ENCODE measurements at regions of chr2 and their contacts with region 1.

Region 1: DNA sequence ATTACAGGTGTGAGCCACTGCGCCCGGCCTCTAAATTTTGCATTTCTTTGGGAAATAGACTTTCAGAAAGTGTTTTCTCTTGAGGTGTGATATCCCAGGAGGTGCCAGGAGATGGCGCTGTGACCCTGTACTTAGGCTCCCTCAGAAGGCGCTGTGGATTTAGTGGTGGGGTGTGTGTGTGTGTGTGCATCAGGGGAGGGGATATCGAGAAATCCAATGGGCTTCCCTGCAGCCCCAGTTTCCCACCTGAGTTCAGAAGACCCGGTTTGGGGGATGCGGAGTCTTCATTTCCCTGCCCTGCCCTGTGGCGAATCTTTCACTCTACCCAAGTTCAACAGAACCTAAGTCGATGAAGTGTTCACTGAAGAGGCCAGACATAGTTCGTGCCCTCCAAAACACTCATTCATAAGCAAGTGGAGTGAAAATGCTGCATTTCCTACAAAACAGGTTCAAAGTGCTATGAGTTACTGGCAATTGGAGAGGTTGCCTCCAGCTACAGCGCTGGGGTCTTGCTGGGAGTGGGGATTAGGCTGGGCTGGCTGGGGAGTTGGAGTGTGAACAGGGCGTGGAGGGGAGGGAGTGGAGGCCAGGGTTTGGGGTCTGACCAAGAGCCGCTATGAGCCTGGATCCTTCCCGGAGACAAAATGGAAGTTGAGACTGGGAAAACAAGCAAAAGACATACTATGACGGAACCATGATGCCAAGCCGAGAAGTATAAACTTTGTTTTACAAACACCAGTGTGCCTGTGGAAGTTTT is 6.5 kb upstream of the WNT6 start:
- DNase-seq: no peak
- H3K4me3 ChIP-seq: no peak overlapping the region
- CTCF ChIP-seq: peak; percentile 76

Region 2: DNA sequence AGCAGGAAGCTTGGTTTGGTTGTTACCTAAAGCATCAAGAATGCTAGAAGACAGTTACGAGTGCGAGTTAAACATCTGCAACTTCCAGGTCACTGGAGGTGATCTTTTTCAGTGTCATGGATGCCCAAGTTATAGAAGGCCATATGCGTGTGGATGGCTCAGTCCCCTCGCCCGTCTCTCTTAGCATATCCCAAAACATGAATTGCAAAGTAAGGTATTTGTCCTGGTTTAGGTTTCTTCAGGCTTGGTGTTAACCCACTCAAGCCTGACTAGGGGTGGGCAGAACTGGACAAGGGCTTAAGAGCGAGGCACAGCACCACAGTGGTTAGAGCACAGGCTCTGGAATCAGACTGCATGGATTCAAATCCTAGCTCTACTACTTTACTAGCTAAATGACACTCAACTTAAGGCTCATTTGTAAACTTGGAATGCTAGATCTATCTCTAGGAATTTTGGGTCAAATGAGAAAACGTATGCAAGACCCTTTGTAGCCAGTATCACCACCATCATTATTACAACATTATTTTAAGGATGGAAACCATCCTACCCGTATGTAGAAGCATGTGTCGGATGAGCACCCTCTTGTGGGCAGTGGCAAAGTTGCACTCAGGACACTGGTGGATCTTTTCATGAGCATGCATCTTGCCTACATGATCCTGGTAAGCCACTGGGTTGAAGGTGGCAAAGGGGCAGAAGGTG is 204.9 kb before region 1 on chr2:
- CTCF ChIA-PET with region 1: interaction called, 34 read pairs
- POLR2A ChIA-PET with region 1: no interaction called
- DNase-seq: no peak
- H3K4me3 ChIP-seq: no peak overlapping the region
- CTCF ChIP-seq: peak; percentile 84

Region 3: GRCh38 chr2:218691234-218691633 is 161.9 kb before region 1 on chr2:
- CTCF ChIA-PET with region 1: interaction called, 71 read pairs
- POLR2A ChIA-PET with region 1: no interaction called
- DNase-seq: no peak
- H3K4me3 ChIP-seq: no peak overlapping the region
- CTCF ChIP-seq: no peak

Region 4: DNA sequence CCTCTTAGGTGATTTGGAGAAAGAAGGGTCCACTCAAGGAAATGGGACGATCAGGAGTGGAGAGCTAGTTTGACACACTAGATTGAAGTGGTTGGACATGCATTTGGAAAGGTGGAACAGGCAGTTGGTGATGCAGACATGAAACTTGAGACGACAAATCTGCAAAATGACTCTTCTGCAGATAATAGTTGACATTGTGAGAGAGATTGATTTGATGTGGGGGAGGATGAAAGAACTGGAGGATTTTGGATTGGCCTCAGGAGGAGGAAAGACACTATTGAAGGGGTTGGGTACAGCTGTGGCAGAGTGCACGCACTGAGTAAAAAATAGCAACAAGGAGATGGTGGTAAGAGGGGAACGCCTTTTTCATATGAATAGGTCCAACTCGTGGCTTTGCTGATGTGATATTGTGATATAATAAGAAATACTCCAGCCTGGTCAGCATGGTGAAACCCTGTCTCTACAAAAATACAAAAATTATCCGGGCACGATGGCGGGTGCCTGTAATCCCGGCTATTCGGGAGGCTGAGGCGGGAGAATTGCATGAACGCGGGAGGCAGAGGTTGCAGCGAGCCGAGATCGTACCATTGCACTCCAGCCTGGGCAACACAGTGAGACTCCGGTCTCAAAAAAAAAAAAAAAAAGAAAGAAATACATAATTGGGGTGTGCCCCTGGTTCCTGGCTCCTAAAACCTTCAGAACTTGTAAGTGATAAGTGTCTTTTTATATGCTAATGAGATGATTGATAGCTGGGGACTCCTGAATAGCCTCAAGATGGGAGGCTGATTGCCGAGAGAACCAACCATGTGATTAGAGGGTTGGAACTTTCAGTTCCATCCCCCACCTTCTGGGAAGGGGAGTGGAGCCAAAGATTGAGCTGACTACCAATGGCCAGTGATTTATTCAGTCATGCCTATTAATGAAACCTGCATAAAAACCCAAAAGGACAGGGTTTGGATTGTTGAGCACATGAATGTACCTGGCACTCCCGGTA is 132.7 kb before region 1 on chr2:
- CTCF ChIA-PET with region 1: interaction called, 106 read pairs
- POLR2A ChIA-PET with region 1: no interaction called
- DNase-seq: no peak
- H3K4me3 ChIP-seq: no peak overlapping the region
- CTCF ChIP-seq: no peak

Region 5: DNA sequence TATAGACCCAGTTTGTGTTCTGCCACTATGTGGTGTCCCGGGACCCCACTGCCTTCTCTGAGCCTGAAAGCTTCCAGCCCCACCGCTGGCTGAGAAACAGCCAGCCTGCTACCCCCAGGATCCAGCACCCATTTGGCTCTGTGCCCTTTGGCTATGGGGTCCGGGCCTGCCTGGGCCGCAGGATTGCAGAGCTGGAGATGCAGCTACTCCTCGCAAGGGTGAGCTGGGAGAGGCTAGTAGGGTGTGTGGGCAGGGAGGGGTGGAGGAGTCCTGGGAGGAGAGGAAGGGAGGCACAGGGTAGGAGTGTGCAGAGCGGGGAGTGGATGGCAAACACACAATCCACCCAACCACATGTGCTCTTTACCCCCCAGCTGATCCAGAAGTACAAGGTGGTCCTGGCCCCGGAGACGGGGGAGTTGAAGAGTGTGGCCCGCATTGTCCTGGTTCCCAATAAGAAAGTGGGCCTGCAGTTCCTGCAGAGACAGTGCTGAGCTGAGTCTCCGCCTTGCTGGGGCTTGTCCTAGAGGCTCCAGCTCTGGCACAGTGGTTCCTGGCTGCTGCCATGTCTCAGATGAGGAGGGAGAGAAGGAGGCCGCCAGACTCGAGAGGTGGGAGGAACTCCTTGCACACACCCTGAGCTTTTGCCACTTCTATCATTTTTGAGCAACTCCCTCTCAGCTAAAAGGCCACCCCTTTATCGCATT is 38.4 kb before region 1 on chr2:
- CTCF ChIA-PET with region 1: interaction called, 13 read pairs
- POLR2A ChIA-PET with region 1: no interaction called
- DNase-seq: no peak
- H3K4me3 ChIP-seq: no peak overlapping the region
- CTCF ChIP-seq: no peak

Region 6: DNA sequence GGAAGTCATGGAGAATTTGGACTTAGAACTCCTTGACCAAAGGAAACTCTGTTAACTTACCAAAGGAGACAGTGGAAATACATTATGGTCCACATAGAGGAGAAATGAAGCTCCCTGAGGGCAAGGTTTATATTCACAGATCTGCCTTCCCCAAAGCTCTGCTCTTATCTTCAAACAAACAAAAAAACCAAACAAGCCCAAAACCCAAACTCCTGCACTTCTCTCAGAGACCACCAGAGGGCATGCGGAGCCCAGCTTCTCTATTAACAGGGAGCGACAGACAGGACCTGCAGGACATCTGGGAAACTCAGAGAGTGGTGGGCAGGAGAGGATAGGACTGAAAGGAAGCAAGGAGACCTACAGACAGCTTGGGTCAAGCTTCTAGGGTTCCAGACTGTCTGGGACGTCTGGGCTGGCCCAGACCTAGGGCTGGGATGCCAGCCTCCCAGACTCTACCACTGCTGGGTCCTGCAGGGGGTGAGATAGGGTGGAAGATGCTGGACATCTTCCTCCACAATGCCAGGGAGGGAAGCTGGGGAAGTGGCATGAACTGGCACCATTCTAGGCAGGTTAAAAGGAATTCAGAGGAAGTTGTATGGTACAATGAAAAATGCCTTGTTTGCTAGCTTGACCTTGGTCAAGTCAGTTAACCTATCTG is 23.6 kb after region 1 on chr2:
- CTCF ChIA-PET with region 1: interaction called, 32 read pairs
- POLR2A ChIA-PET with region 1: no interaction called
- DNase-seq: no peak
- H3K4me3 ChIP-seq: no peak overlapping the region
- CTCF ChIP-seq: peak; percentile 86

Region 7: GRCh38 chr2:219168526-219168925 is 315.4 kb after region 1 on chr2:
- CTCF ChIA-PET with region 1: no interaction called
- POLR2A ChIA-PET with region 1: no interaction called
- DNase-seq: no peak
- H3K4me3 ChIP-seq: no peak overlapping the region
- CTCF ChIP-seq: no peak

Measured in AG04449 (cell line).